GM10248 (cell line): ENCODE measurements at regions of chr10 and their contacts with region 1.

Region 1: DNA sequence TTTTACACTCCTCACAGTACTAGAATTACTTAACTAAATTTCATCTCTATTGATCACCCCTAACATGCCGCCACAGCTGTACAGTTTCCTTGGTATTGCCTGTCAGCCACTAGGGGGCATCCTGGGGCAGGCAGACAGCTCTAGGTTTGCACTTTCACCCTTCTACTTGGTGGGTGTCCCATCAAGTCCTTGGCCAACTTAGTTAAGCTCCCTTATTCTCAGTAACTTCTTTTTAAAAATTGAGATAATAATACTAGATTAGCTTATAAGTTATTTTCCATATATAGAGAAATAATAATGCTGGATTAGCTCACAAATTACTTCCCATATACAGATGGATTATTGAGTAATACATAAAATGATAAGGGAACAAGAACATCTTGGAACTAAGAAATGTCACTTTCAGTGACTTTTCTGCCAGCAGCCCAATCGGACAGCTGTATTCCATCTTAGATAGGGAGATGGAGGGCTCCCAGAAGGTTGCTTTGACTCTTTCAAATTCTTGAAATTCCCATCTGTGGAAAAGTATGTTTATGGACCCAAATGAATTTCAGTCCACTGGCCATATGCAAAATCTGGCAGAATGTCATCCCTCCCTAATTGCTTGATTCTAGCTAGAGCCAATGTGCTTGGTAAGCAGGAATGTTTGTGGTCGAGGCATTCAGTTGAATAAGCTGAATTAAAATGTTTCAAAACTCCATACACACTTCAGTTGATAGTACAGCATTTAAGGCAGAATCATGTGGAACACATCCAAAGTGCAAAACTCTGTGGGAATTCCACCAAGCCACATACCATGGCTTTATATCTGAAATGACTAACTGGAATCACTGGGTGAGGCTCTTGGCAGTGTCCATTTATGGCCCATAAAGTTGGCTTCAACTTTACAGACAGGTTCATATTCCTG is 309.7 kb downstream of the CSTF2T start:
- DNase-seq: peak; percentile 43
- CTCF ChIP-seq: peak; percentile 85

Region 2: DNA sequence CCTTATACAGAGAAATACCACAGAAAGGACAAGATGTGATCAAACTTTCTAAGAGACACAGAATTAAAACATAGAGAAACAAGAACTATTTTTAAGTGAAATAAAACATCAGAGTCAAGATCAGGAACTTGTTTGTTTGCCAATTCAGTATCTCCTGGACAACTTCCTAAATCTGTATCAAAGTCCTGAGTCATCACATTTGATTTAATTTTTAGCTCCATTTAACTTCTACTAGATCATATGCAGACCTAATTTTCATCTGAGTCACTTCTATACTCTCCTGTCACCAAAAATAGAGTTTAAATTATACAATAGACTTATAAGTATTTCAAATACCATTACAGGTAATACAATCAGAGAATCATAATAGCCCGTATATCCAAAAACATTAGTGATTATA is 47.3 kb before region 1 on chr10:
- CTCF ChIA-PET with region 1: no interaction called
- POLR2A ChIA-PET with region 1: no interaction called
- DNase-seq: no peak
- CTCF ChIP-seq: no peak

Region 3: GRCh38 chr10:51368939-51369338 is 20.7 kb before region 1 on chr10:
- CTCF ChIA-PET with region 1: interaction called, 16 read pairs
- POLR2A ChIA-PET with region 1: no interaction called
- DNase-seq: no peak
- CTCF ChIP-seq: peak; percentile 11

Region 4: DNA sequence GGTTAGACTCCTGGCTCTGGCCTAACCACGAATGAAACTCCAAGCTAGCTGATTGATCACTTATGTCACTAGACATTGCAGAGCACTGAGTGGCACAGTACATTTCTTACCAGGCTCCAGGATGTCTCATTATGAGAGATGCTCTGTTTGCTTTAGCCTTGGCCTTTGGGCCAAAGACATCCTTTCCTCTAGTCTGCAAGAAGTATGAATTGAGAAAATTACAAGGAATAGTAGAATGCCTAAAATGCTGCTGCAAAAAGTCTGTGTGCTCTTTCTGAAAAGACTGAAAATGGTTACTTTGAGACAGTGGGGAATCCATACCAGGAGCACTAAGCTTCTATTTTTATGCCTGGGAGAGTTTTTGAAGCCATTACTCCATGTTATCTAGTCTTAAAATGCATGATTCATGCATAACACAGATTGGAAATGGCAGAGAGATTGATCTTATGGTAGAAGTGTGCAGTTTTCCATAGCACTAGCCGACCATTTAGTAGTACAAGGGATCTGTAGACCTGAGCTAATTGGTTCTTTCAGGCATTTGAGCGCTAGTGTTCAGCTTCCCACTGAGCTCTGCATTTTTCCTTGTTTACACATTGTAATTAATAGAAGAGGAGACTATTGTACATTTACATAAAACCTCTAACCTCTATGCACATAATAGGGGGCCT is 11.6 kb before region 1 on chr10:
- CTCF ChIA-PET with region 1: interaction called, 13 read pairs
- POLR2A ChIA-PET with region 1: no interaction called
- DNase-seq: no peak
- CTCF ChIP-seq: no peak

Region 5: GRCh38 chr10:51733057-51733456 is 343.4 kb after region 1 on chr10:
- CTCF ChIA-PET with region 1: no interaction called
- POLR2A ChIA-PET with region 1: no interaction called
- DNase-seq: no peak
- CTCF ChIP-seq: no peak

Region 6: DNA sequence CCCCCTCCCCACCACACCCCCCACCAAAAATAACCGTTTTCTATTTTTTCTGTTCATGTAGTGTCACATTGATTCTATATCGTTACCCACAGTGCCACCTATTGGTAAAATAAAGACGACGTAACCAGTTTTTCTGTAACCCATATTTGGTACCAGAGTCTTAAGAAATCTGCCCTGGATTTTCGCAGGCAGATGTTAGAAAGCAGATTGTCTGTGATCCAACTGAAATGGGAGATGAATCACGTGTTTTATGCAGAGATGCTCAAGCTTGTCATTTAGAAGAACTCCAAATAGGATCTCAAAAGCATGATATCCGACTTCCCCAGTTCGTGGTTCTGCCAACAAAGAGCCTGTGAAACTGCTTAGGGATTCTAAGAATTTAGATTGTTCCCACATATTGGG is 570.8 kb after region 1 on chr10:
- CTCF ChIA-PET with region 1: interaction called, 64 read pairs
- POLR2A ChIA-PET with region 1: no interaction called
- DNase-seq: peak; percentile 16
- CTCF ChIP-seq: peak; percentile 51

Region 7: GRCh38 chr10:52215745-52216361 is 826.2 kb after region 1 on chr10:
- CTCF ChIA-PET with region 1: interaction called, 23 read pairs
- POLR2A ChIA-PET with region 1: no interaction called
- DNase-seq: peak; percentile 39
- CTCF ChIP-seq: peak; percentile 79